ENCODE measurements at regions of chr2 and their contacts with region 1.

Region 1: DNA sequence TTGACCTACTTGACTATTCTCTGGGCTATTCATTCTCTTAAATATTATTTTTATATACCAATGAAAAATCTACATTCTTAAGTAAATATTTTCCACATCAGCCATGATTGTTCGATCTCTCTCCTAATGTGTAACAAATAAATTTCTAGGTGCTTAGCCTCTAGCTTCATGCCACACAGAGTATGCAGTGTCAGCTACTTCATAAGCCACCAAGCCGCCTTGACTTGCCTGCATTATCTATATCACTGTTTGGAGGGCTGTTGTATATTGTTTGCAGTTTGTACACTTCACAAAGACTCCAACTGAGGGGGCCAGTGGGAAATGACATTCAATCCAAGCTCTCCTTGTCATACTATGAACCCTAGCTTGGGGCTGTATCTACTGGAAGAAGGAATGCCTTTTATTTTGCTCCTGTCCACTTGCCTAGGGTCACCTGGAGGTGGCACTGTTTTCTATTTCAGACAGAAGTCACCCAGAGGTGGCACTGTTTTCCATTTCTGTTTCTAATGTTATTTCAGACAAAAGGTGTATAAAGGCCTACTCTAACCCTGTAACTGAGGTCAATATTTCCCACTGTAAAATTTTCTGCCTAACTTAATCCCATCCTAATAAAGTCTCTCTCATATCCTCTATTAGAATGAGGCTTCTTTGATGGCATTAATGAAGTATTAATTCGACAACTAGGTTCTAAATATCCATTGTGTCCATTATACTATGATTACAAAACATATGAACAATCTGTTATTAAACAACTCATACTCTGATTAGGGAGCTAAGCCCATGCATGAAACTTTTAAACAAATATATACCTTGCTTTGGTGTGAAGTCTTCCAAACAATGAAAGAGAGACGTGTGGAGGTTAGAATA is 36.4 kb downstream of the COL5A2 start:
- DNase-seq: peak in 32 of 35 experiments; percentile 1 to 72 (median 29)
- ATAC-seq: peak; percentile 58 to 80 (median 63)
- H3K4me3 ChIP-seq: no peak overlapping the region
- H3K4me3 Mint-ChIP-seq: no peak overlapping the region
- H3K27ac ChIP-seq: no peak overlapping the region
- H3K27ac Mint-ChIP-seq: no peak overlapping the region
- H3K4me1 ChIP-seq: no peaks in the 10 kb centered on the region
- H3K4me1 Mint-ChIP-seq: peaks cover 0 to 7% (median 2%) of the 10 kb centered on the region in 3 donors
- H3K27me3 ChIP-seq: no peaks in the 10 kb centered on the region
- H3K27me3 Mint-ChIP-seq: no peaks in the 10 kb centered on the region

Region 2: GRCh38 chr2:189287982-189288521 is 144.9 kb after region 1 on chr2:
- CTCF ChIA-PET with region 1: interaction called, 4 to 10 read pairs
- POLR2A ChIA-PET with region 1: interaction called in 1 of 2 experiments, 3 read pairs
- DNase-seq: peak in 1 of 35 experiments; percentile 36
- ATAC-seq: peak in 1 of 4 experiments; percentile 55
- H3K4me3 ChIP-seq: no peak overlapping the region
- H3K4me3 Mint-ChIP-seq: no peak overlapping the region
- H3K27ac ChIP-seq: no peak overlapping the region
- H3K27ac Mint-ChIP-seq: peak overlapping the region in 1 of 2 donors; percentile 3
- H3K4me1 ChIP-seq: peaks cover 0 to 3% of the 10 kb centered on the region in 2 experiments
- H3K4me1 Mint-ChIP-seq: peaks cover 10 to 13% (median 12%) of the 10 kb centered on the region in 3 donors
- H3K27me3 ChIP-seq: no peaks in the 10 kb centered on the region
- H3K27me3 Mint-ChIP-seq: no peaks in the 10 kb centered on the region

Region 3: GRCh38 chr2:189298481-189298880 is 155.4 kb after region 1 on chr2:
- CTCF ChIA-PET with region 1: no interaction called
- POLR2A ChIA-PET with region 1: no interaction called
- DNase-seq: no peak
- ATAC-seq: no peak
- H3K4me3 ChIP-seq: no peak overlapping the region
- H3K4me3 Mint-ChIP-seq: peak overlapping the region in 1 of 3 donors; percentile 38
- H3K27ac ChIP-seq: no peak overlapping the region
- H3K27ac Mint-ChIP-seq: peak overlapping the region; percentile 56 to 57
- H3K4me1 ChIP-seq: peaks cover 23 to 75% of the 10 kb centered on the region in 2 experiments
- H3K4me1 Mint-ChIP-seq: peaks cover 73 to 89% (median 76%) of the 10 kb centered on the region in 3 donors
- H3K27me3 ChIP-seq: no peaks in the 10 kb centered on the region
- H3K27me3 Mint-ChIP-seq: no peaks in the 10 kb centered on the region

Region 4: GRCh38 chr2:189347540-189347939 is 204.4 kb after region 1 on chr2:
- CTCF ChIA-PET with region 1: interaction called, 6 to 26 read pairs
- POLR2A ChIA-PET with region 1: no interaction called
- DNase-seq: peak in 11 of 35 experiments; percentile 1 to 62 (median 4)
- ATAC-seq: peak in 2 of 4 experiments; percentile 53 to 66
- H3K4me3 ChIP-seq: no peak overlapping the region
- H3K4me3 Mint-ChIP-seq: no peak overlapping the region
- H3K27ac ChIP-seq: no peak overlapping the region
- H3K27ac Mint-ChIP-seq: no peak overlapping the region
- H3K4me1 ChIP-seq: peaks cover 0 to 12% of the 10 kb centered on the region in 2 experiments
- H3K4me1 Mint-ChIP-seq: peaks cover 13 to 23% (median 13%) of the 10 kb centered on the region in 3 donors
- H3K27me3 ChIP-seq: no peaks in the 10 kb centered on the region
- H3K27me3 Mint-ChIP-seq: no peaks in the 10 kb centered on the region

Region 5: DNA sequence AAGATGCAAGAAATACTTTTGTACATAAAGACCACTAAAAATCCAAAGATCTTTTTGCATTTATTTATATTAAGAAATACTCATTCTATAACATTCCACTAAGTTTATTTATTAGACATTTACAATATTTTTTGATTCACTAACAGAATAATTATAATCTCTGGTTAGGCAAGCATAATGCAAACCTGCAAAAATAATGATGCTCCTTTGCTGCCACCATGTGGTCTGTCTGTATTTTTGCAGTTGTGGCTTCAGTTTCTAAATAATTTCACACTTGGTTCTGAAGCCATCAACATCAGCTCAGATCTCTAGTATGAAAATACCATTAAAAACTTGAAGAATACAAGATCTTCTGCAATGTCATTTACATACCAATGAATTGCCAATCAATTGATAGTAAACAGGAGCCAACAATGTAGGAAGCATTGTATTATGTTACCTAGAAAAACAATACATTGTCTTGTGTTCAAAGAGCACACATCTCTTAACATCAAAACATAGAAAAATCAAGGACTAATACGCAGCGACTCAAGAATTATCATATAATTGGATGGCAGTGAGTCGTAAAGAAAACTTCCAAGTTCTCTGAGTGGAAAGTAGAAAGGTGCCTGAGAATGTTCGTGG is 269.3 kb after region 1 on chr2:
- CTCF ChIA-PET with region 1: interaction called, 6 to 18 read pairs
- POLR2A ChIA-PET with region 1: no interaction called
- DNase-seq: peak in 30 of 35 experiments; percentile 2 to 75 (median 22)
- ATAC-seq: peak in 2 of 4 experiments; percentile 52 to 57
- H3K4me3 ChIP-seq: no peak overlapping the region
- H3K4me3 Mint-ChIP-seq: no peak overlapping the region
- H3K27ac ChIP-seq: no peak overlapping the region
- H3K27ac Mint-ChIP-seq: no peak overlapping the region
- H3K4me1 ChIP-seq: peaks cover 0 to 6% of the 10 kb centered on the region in 2 experiments
- H3K4me1 Mint-ChIP-seq: peaks cover 8 to 11% (median 10%) of the 10 kb centered on the region in 3 donors
- H3K27me3 ChIP-seq: no peaks in the 10 kb centered on the region
- H3K27me3 Mint-ChIP-seq: no peaks in the 10 kb centered on the region

Measured in T-cell (primary cell).